ENCODE measurements at regions of chr17 and their contacts with region 1.

Region 1: GRCh38 chr17:66165513-66166123 is 26.3 kb downstream of the CEP112 start:
- DNase-seq: peak in 3 of 7 donors; percentile 4 to 25 (median 19)
- H3K4me3 ChIP-seq: no peak overlapping the region
- H3K27ac ChIP-seq: no peak overlapping the region
- H3K4me1 ChIP-seq: no peaks in the 10 kb centered on the region
- H3K27me3 ChIP-seq: no peaks in the 10 kb centered on the region
- CTCF ChIP-seq: peak; percentile 37 to 87 (median 80)
- POLR2A ChIP-seq: no peak

Region 2: GRCh38 chr17:65294179-65294720 is 871.4 kb before region 1 on chr17:
- intact Hi-C with region 1: loop called in 1 of 2 experiments (anchors 10 kb)
- DNase-seq: peak; percentile 45 to 84 (median 73)
- H3K4me3 ChIP-seq: no peak overlapping the region
- H3K27ac ChIP-seq: no peak overlapping the region
- H3K4me1 ChIP-seq: no peaks in the 10 kb centered on the region
- H3K27me3 ChIP-seq: no peaks in the 10 kb centered on the region
- CTCF ChIP-seq: peak; percentile 61 to 84 (median 70)
- POLR2A ChIP-seq: no peak

Region 3: GRCh38 chr17:66152756-66153155 is 12.9 kb before region 1 on chr17:
- intact Hi-C with region 1: no loop called
- DNase-seq: no peak
- H3K4me3 ChIP-seq: no peak overlapping the region
- H3K27ac ChIP-seq: no peak overlapping the region
- H3K4me1 ChIP-seq: no peaks in the 10 kb centered on the region
- H3K27me3 ChIP-seq: no peaks in the 10 kb centered on the region
- CTCF ChIP-seq: no peak
- POLR2A ChIP-seq: no peak

Region 4: DNA sequence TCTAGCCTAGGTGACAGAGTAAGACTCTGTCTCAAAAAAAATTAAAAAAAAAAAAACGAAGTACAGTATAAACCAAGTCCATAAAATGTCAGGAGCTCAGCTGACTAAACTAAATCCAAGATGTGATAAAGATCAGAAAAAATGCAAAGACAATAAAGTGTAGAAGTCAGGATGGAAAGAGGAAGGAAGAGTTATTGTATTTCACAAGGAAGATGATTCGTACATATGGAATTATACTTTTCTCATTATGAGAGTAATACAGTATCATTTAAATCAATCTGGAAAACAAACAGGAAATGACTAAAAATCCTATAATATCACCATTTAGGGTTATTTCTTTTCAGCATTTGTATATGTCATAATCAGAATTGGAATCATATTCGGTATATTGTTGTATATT is 75.0 kb after region 1 on chr17:
- intact Hi-C with region 1: no loop called
- DNase-seq: no peak
- H3K4me3 ChIP-seq: no peak overlapping the region
- H3K27ac ChIP-seq: no peak overlapping the region
- H3K4me1 ChIP-seq: no peaks in the 10 kb centered on the region
- H3K27me3 ChIP-seq: no peaks in the 10 kb centered on the region
- CTCF ChIP-seq: no peak
- POLR2A ChIP-seq: no peak

Measured in adrenal gland (tissue), 19 donors.